ENCODE measurements at regions of chr2 and their contacts with region 1.

Region 1: GRCh38 chr2:85728883-85729824 is 24.6 kb upstream of the ATOH8 start:
- DNase-seq: peak; percentile 76
- H3K4me3 ChIP-seq: no peak overlapping the region
- H3K27ac ChIP-seq: no peak overlapping the region
- H3K4me1 ChIP-seq: peaks cover 4% of the 10 kb centered on the region
- H3K27me3 ChIP-seq: peaks cover 0 to 3% of the 10 kb centered on the region in 2 experiments
- CTCF ChIP-seq: peak; percentile 97 to 99
- POLR2A ChIP-seq: no peak

Region 2: GRCh38 chr2:85642725-85643124 is 86.4 kb before region 1 on chr2:
- CTCF ChIA-PET with region 1: interaction called, 25 read pairs
- POLR2A ChIA-PET with region 1: no interaction called
- dilution Hi-C with region 1: no loop called
- intact Hi-C with region 1: loop called (anchors 5 kb)
- DNase-seq: no peak
- H3K4me3 ChIP-seq: no peak overlapping the region
- H3K27ac ChIP-seq: no peak overlapping the region
- H3K4me1 ChIP-seq: no peaks in the 10 kb centered on the region
- H3K27me3 ChIP-seq: no peaks in the 10 kb centered on the region
- CTCF ChIP-seq: no peak
- POLR2A ChIP-seq: no peak

Region 3: DNA sequence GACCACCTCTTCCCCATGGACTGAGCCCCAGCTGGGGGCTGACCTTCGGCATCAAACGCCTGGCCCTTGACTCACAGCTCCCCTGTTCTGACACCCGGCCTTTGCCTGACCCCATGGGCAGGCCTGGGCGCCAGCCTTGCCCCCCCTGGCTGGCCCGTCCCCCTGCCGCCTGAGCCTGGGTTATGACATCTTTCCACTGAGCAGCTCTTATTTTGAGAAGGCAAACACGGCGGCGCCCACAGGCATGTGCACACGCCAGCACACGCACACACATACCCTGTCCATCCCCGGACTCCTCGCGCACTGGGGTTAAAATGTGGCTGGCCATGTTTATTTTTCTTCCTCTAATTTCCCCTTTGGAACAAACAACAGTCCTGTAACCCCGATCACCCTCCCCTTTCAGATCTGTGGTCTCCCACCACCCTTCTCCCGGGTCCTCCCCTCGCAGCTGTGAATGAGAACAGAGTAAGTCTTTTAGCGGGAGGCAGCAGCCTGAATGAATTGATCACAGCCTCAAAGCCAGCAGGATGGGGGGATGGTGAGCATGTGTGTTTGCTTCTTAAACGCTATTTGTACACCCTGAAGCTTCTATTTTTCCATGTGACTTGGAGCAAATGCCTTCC is 12.8 kb after region 1 on chr2:
- CTCF ChIA-PET with region 1: interaction called, 32 read pairs
- POLR2A ChIA-PET with region 1: no interaction called
- dilution Hi-C with region 1: no loop called
- intact Hi-C with region 1: loop called (anchors 1 kb)
- DNase-seq: peak; percentile 87
- H3K4me3 ChIP-seq: peak overlapping the region in 1 of 3 experiments; percentile 3
- H3K27ac ChIP-seq: peak overlapping the region; percentile 97
- H3K4me1 ChIP-seq: peaks cover 30% of the 10 kb centered on the region
- H3K27me3 ChIP-seq: no peaks in the 10 kb centered on the region
- CTCF ChIP-seq: no peak
- POLR2A ChIP-seq: no peak

Region 4: DNA sequence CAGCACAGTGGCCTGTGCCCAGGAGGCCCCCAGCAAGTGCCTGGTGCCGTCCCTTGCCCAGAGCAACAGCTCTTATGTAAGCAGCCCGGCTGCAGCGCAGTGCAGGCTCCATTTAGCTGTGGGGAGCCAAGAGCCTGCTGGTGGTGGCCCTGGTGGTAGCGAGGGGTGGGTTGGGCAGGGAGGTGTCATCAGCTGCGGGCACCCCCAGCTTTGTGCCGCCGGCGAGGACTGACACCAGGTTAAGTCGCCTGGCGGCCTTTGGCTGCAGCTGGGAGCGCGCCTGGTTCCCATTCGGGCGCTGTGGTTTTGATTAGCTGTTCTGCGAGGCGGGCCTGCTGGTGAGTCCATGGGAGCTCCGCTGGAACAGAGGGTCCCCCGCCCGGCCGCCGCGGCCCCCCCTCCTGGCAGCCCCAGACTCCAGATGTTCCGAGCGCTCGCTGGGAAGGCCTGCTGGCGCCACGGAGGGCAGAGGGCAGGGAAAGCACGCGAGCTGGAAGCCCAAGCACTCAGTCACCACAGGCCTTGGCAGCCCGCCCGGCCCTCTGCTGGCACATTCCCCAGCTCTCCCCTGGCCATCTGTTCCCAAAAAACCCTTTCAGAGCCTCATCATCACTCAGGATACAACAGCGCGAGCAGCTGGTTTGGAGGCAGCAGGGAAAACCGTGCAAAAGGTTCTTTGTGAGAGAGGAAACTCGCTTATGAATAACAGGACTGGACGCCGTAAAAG is 43.0 kb after region 1 on chr2:
- CTCF ChIA-PET with region 1: interaction called, 21 read pairs
- POLR2A ChIA-PET with region 1: no interaction called
- dilution Hi-C with region 1: no loop called
- intact Hi-C with region 1: loop called (anchors 1 kb)
- DNase-seq: peak; percentile 100
- H3K4me3 ChIP-seq: no peak overlapping the region
- H3K27ac ChIP-seq: peak overlapping the region; percentile 100
- H3K4me1 ChIP-seq: peaks cover 38% of the 10 kb centered on the region
- H3K27me3 ChIP-seq: no peaks in the 10 kb centered on the region
- CTCF ChIP-seq: peak; percentile 32 to 42
- POLR2A ChIP-seq: peak; percentile 55

Region 5: GRCh38 chr2:85804583-85804982 is 75.4 kb after region 1 on chr2:
- CTCF ChIA-PET with region 1: interaction called, 193 read pairs
- POLR2A ChIA-PET with region 1: no interaction called
- dilution Hi-C with region 1: loop called (anchors 25 kb)
- intact Hi-C with region 1: loop called (anchors 1 kb)
- DNase-seq: peak; percentile 25
- H3K4me3 ChIP-seq: no peak overlapping the region
- H3K27ac ChIP-seq: no peak overlapping the region
- H3K4me1 ChIP-seq: no peaks in the 10 kb centered on the region
- H3K27me3 ChIP-seq: no peaks in the 10 kb centered on the region
- CTCF ChIP-seq: peak; percentile 49 to 56
- POLR2A ChIP-seq: no peak

Region 6: GRCh38 chr2:86048888-86049287 is 319.7 kb after region 1 on chr2:
- CTCF ChIA-PET with region 1: no interaction called
- POLR2A ChIA-PET with region 1: no interaction called
- dilution Hi-C with region 1: no loop called
- intact Hi-C with region 1: no loop called
- DNase-seq: no peak
- H3K4me3 ChIP-seq: no peak overlapping the region
- H3K27ac ChIP-seq: no peak overlapping the region
- H3K4me1 ChIP-seq: peaks cover 9% of the 10 kb centered on the region
- H3K27me3 ChIP-seq: no peaks in the 10 kb centered on the region
- CTCF ChIP-seq: no peak
- POLR2A ChIP-seq: no peak

Region 7: DNA sequence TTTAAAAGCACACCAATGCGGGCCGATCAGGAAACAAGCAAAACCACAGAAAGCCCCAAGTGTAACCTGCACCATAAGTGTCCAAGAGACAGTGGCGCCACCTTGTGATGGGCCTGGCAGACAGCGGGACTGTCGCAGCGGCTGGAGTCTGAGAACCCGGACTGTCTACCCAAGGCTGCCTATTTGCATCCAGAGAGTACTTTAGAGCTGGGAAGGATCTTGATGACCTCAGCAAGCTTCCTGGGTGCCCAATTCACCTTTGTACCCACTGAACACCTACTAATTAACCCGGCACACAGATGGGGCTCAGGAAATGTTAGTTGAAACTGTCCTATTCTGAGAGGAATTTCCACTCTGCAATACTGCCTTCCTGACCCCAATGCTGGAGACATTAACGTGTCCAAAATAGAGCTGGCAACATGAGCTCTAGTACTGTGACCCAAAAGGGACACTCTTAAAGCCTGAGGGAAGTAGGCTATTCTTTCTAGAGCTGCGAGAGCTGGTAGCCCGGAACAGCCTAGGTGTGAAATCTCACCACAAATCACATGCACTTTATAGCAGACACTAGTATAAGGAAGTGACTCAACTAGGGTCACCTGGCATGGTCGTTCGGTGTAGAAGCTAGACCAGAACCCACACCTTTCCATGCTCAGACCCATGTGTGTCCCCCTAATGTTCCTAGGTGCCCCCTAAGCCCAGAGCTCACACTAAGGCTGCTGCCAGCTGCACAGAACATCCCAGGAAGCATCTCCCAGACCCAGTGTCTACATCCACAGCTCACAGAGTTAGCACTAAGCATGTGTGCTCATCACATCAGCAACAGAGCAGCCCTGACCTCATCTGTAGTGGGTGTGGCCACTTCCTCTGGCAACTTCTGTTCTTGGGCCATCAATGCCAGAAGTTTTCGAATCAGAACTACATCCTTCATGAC is 351.1 kb after region 1 on chr2:
- CTCF ChIA-PET with region 1: interaction called, 8 read pairs
- POLR2A ChIA-PET with region 1: no interaction called
- dilution Hi-C with region 1: no loop called
- intact Hi-C with region 1: loop called (anchors 2 kb)
- DNase-seq: peak; percentile 58
- H3K4me3 ChIP-seq: no peak overlapping the region
- H3K27ac ChIP-seq: peak overlapping the region; percentile 9
- H3K4me1 ChIP-seq: peaks cover 3% of the 10 kb centered on the region
- H3K27me3 ChIP-seq: no peaks in the 10 kb centered on the region
- CTCF ChIP-seq: peak; percentile 84 to 91
- POLR2A ChIP-seq: no peak

Measured in endothelial cell of umbilical vein (primary cell).